GM10248 (cell line): ENCODE measurements at regions of chr10 and their contacts with region 1.

Region 1: DNA sequence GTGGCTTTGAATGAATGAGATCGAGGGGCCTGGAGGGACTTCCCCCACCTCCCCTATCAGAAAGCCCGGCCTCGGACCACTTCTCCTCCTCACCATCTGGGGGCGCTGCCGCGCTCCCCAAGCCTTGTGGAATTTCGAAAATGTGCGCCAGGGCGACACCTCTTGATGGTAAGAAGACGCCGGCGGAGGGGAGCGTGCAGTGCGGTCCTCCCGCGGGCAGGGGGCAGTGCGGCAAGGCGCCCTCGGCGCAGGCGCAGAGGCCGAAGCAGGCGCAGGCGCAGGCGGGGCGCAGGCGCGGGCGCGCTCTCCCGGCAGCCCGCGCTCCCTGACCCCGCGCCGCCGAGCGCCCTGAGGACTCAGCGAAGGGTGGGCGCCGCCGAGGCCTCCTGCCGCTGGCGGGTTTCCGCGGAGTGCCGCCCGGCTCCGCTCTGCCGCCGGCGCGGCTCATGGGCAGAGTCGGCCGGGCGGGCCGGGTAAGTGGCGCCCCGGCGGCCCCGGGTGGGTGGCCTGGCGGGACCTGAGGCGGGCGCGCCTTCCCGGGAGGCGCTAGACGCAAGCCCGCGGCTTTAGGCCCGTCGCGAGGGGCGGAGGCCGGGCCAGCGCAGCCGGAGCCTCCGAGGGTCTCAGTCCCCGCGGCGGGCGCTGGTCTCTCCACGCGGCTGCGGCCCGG is at the start of gene RBM17:
- DNase-seq: peak; percentile 95
- CTCF ChIP-seq: peak; percentile 100

Region 2: GRCh38 chr10:5948999-5949759 is 139.7 kb before region 1 on chr10:
- CTCF ChIA-PET with region 1: no interaction called
- POLR2A ChIA-PET with region 1: no interaction called
- DNase-seq: peak; percentile 49
- CTCF ChIP-seq: peak; percentile 36

Region 3: DNA sequence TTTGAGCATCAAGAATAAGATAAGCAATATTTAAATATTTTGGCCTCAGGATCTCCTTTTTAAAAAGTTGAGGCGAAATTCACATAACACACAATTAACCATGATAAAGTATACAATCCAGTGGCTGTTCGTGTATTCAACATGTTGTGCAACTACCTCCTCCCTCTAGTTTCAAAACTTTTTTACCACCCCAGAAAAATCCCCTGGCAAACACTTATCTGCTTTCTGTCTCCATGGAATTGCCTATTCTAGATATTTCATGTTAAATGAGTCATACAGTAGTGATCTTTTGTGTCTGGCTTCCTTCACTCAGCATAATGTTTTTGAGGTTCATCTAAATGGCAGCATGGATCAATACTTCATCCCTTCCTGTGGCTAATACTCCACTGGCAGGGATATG is 79.7 kb before region 1 on chr10:
- CTCF ChIA-PET with region 1: interaction called, 32 read pairs
- POLR2A ChIA-PET with region 1: no interaction called
- DNase-seq: no peak
- CTCF ChIP-seq: no peak

Region 4: GRCh38 chr10:6036861-6037321 is 52.0 kb before region 1 on chr10:
- CTCF ChIA-PET with region 1: interaction called, 17 read pairs
- POLR2A ChIA-PET with region 1: no interaction called
- DNase-seq: no peak
- CTCF ChIP-seq: no peak

Region 5: GRCh38 chr10:6062101-6062771 is 26.6 kb before region 1 on chr10 and contains the start of gene IL2RA:
- CTCF ChIA-PET with region 1: interaction called, 133 read pairs
- POLR2A ChIA-PET with region 1: interaction called, 3 read pairs
- DNase-seq: no peak
- CTCF ChIP-seq: no peak

Region 6: DNA sequence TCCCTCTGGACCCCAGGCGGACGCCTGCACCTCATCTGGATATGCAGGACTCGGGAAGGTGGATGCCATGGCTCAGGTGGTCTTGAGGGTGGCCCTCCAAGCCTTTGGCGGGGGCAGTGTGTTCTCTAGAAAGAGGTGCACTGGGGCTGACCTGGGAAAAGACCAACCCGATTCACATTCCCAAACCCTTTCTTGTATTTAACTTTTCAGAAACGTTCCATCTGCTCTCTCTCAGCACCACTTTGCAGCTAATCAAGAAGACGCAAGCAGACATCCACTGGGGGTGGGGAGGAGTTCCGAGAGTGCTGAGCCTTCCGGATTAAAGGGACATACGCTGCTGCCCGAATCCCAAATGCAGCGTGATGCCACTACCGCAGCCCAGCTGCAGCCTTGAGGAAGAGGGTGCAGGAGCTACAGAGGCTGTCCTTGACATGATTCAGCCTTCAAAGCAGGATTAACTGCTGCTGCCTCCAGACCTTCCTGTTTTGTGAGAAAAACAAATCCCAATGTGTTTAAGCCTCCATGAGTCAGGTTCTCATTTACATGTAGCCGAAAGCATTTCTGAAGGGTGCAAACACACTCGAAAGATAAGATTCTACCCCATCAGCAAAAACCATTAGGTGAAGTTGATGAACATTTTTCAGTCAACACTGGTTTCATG is 39.9 kb after region 1 on chr10:
- CTCF ChIA-PET with region 1: interaction called, 26 read pairs
- POLR2A ChIA-PET with region 1: no interaction called
- DNase-seq: no peak
- CTCF ChIP-seq: no peak

Region 7: GRCh38 chr10:6151087-6151977 is 62.5 kb after region 1 on chr10:
- CTCF ChIA-PET with region 1: interaction called, 23 read pairs
- POLR2A ChIA-PET with region 1: no interaction called
- DNase-seq: peak; percentile 78
- CTCF ChIP-seq: peak; percentile 71

Region 8: GRCh38 chr10:6211671-6212635 is 123.1 kb after region 1 on chr10:
- CTCF ChIA-PET with region 1: no interaction called
- POLR2A ChIA-PET with region 1: no interaction called
- DNase-seq: no peak
- CTCF ChIP-seq: no peak

Region 9: DNA sequence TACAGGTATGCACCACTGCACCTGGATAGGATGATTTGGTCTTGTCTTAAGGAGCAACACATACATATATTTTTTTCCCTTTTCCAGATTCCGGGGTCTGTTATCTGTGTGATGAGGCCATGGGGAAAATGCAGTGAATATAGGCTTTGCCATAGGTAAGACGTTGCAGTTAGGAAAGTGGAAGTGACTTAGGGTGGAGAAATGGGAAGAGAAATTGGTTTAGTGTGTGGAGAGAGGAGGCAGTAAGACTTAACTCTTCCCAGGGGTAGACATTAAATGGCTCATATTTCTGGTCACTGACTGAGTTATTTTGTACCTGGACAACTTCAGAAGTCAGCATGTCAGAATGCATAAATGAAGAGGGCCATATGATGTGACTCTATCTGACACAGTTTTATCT is 180.6 kb after region 1 on chr10:
- CTCF ChIA-PET with region 1: no interaction called
- POLR2A ChIA-PET with region 1: no interaction called
- DNase-seq: no peak
- CTCF ChIP-seq: no peak